Activated CD4-positive, alpha-beta T cell treated with anti-CD3 and anti-CD28 coated beads, Interleukin-2, amount 10 ng/mL, durations not matched to agents 7 days and 5 days (primary cell): ENCODE measurements at regions of chr7 and their contacts with region 1.

Region 1: GRCh38 chr7:105656903-105657521 is 75.7 kb upstream of the EFCAB10 start:
- DNase-seq: peak; percentile 73
- H3K4me3 Mint-ChIP-seq: no peak overlapping the region
- H3K27ac Mint-ChIP-seq: no peak overlapping the region
- H3K4me1 Mint-ChIP-seq: peaks cover 6% of the 10 kb centered on the region
- H3K27me3 Mint-ChIP-seq: no peaks in the 10 kb centered on the region

Region 2: GRCh38 chr7:105512415-105512814 is 144.6 kb before region 1 on chr7:
- CTCF ChIA-PET with region 1: no interaction called
- POLR2A ChIA-PET with region 1: no interaction called
- DNase-seq: no peak
- H3K4me3 Mint-ChIP-seq: no peak overlapping the region
- H3K27ac Mint-ChIP-seq: peak overlapping the region; percentile 64
- H3K4me1 Mint-ChIP-seq: peaks cover 23% of the 10 kb centered on the region
- H3K27me3 Mint-ChIP-seq: no peaks in the 10 kb centered on the region

Region 3: DNA sequence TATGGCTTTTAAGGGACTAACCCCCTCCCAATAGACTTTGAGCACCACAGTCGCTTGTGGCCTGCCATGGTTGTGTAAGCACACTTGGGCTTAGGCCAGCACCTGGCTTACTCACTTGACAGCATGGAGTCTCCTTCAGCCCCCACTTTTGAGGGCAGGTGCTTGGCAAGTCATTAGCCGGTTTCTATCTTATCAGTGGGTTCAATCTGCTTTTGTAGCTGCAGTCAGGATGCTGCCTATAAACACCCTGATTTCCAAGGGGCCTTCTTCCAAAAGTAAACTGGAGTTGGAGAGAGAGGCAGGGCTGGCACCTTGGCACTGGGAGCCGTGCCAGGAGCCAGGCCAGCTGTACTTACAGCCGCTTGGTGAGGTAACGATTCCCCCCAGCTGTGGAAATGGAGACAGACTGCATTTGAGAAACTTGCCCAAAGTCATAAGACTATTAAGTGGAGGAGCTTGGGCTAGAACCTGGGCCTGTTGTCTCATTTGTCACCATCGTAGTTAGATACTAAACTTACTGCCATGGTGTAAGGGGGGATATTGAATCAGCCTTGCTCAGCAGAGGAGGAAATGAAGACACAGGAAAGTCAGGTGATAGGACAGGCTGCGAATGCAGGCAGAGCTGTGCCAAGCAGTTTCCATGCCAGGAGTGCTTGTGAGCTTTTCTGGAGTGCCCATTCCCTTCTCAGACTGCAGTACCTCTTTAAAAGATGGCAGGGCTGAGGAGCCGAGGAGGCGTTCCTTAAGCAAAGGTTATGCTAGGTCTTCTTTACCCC is 16.5 kb after region 1 on chr7:
- CTCF ChIA-PET with region 1: interaction called, 18 read pairs
- POLR2A ChIA-PET with region 1: no interaction called
- DNase-seq: no peak
- H3K4me3 Mint-ChIP-seq: no peak overlapping the region
- H3K27ac Mint-ChIP-seq: peak overlapping the region; percentile 50
- H3K4me1 Mint-ChIP-seq: peaks cover 63% of the 10 kb centered on the region
- H3K27me3 Mint-ChIP-seq: no peaks in the 10 kb centered on the region

Region 4: GRCh38 chr7:105678811-105679495 is 21.9 kb after region 1 on chr7:
- CTCF ChIA-PET with region 1: interaction called, 18 read pairs
- POLR2A ChIA-PET with region 1: no interaction called
- DNase-seq: peak; percentile 37
- H3K4me3 Mint-ChIP-seq: peak overlapping the region; percentile 82
- H3K27ac Mint-ChIP-seq: peak overlapping the region; percentile 97
- H3K4me1 Mint-ChIP-seq: peaks cover 57% of the 10 kb centered on the region
- H3K27me3 Mint-ChIP-seq: no peaks in the 10 kb centered on the region